Right lobe of liver (tissue), 6 donors: ENCODE measurements at regions of chr6 and their contacts with region 1.

Region 1: GRCh38 chr6:112307707-112308106 is 39.4 kb upstream of the RFPL4B start:
- DNase-seq: no peak
- ATAC-seq: no peak
- H3K4me3 ChIP-seq: no peak overlapping the region
- H3K27ac ChIP-seq: no peak overlapping the region
- H3K4me1 ChIP-seq: peaks cover 0 to 11% (median 0%) of the 10 kb centered on the region in 4 donors
- H3K27me3 ChIP-seq: no peaks in the 10 kb centered on the region
- CTCF ChIP-seq: no peak
- POLR2A ChIP-seq: no peak

Region 2: DNA sequence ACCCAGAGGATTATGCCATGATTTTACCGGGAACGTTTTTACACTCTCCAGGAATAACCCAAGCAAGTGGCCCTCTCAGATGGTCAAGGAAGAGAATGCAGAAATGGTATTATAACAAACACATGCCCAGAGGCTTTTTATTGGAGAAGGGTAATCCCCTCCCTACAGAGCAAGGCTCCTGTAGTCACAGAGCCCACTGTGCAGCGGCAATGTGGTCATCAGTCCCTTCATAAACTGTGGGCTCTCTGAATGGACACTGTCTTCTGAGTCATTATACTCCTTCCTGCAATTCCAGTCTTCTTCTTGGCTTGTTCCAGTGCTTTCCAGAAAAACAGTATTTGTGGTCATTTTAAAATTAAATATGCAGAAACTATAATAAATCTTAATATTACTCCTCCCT is 128.1 kb before region 1 on chr6:
- intact Hi-C with region 1: loop called in 1 of 2 experiments (anchors 5 kb)
- DNase-seq: no peak
- ATAC-seq: no peak
- H3K4me3 ChIP-seq: no peak overlapping the region
- H3K27ac ChIP-seq: no peak overlapping the region
- H3K4me1 ChIP-seq: peaks cover 0 to 8% (median 0%) of the 10 kb centered on the region in 4 donors
- H3K27me3 ChIP-seq: no peaks in the 10 kb centered on the region
- CTCF ChIP-seq: no peak
- POLR2A ChIP-seq: no peak